Heart left ventricle (tissue), 16 donors: ENCODE measurements at regions of chr7 and their contacts with region 1.

Region 1: GRCh38 chr7:35537067-35538023 is 157.6 kb downstream of the HERPUD2 start:
- DNase-seq: peak; percentile 67 to 89 (median 76)
- ATAC-seq: peak; percentile 94 to 98 (median 97)
- H3K4me3 ChIP-seq: peak overlapping the region; percentile 14 to 55 (median 50)
- H3K27ac ChIP-seq: peak overlapping the region in 2 of 12 donors; percentile 28 to 30
- H3K4me1 ChIP-seq: peaks cover 0 to 9% (median 3%) of the 10 kb centered on the region in 12 donors
- H3K27me3 ChIP-seq: peaks cover 0 to 5% (median 0%) of the 10 kb centered on the region in 9 donors
- CTCF ChIP-seq: peak; percentile 81 to 96 (median 93)
- POLR2A ChIP-seq: no peak

Region 2: GRCh38 chr7:35185907-35186731 is 351.2 kb before region 1 on chr7:
- intact Hi-C with region 1: loop called in 5 of 10 experiments (anchors 5 to 10 kb)
- DNase-seq: peak; percentile 65 to 83 (median 72)
- ATAC-seq: peak; percentile 77 to 93 (median 89)
- H3K4me3 ChIP-seq: peak overlapping the region; percentile 32 to 74 (median 56)
- H3K27ac ChIP-seq: peak overlapping the region; percentile 46 to 95 (median 82)
- H3K4me1 ChIP-seq: peaks cover 0 to 4% (median 0%) of the 10 kb centered on the region in 12 donors
- H3K27me3 ChIP-seq: peaks cover 0 to 16% (median 0%) of the 10 kb centered on the region in 9 donors
- CTCF ChIP-seq: peak in 2 of 12 donors; percentile 26 to 32
- POLR2A ChIP-seq: no peak

Region 3: GRCh38 chr7:35424869-35425495 is 112.4 kb before region 1 on chr7:
- intact Hi-C with region 1: loop called in 3 of 10 experiments (anchors 5 kb)
- DNase-seq: peak; percentile 55 to 79 (median 65)
- ATAC-seq: peak; percentile 55 to 77 (median 72)
- H3K4me3 ChIP-seq: no peak overlapping the region
- H3K27ac ChIP-seq: no peak overlapping the region
- H3K4me1 ChIP-seq: peaks cover 0 to 13% (median 2%) of the 10 kb centered on the region in 12 donors
- H3K27me3 ChIP-seq: peaks cover 0 to 3% (median 0%) of the 10 kb centered on the region in 9 donors
- CTCF ChIP-seq: peak; percentile 64 to 79 (median 70)
- POLR2A ChIP-seq: no peak

Region 4: DNA sequence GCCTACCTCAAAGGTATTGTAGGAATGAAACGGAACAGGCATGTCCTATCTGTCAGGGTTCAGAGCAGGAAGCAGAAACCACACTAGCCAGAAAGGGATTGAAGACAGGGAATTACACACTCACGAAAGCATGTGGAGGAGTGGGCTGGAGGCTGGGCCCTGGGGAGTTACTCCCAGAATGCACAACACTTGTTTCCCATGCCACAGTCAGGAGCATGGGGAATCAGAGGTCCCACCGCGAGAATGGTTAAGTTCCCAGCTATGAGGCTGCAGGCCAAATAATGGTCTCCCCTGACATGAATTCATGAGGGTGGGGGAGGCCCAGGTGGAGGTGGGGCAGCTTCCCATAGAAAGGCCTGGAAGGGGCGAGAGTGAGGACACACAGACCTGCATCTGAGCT is 55.1 kb before region 1 on chr7:
- intact Hi-C with region 1: no loop called
- DNase-seq: no peak
- ATAC-seq: no peak
- H3K4me3 ChIP-seq: no peak overlapping the region
- H3K27ac ChIP-seq: no peak overlapping the region
- H3K4me1 ChIP-seq: no peaks in the 10 kb centered on the region
- H3K27me3 ChIP-seq: no peaks in the 10 kb centered on the region
- CTCF ChIP-seq: no peak
- POLR2A ChIP-seq: no peak

Region 5: GRCh38 chr7:35624299-35625186 is 87.2 kb after region 1 on chr7:
- intact Hi-C with region 1: loop called in 5 of 10 experiments (anchors 5 to 10 kb)
- DNase-seq: peak in 3 of 5 donors; percentile 18 to 36 (median 25)
- ATAC-seq: peak; percentile 76 to 88 (median 84)
- H3K4me3 ChIP-seq: no peak overlapping the region
- H3K27ac ChIP-seq: no peak overlapping the region
- H3K4me1 ChIP-seq: peaks cover 0 to 9% (median 4%) of the 10 kb centered on the region in 12 donors
- H3K27me3 ChIP-seq: no peaks in the 10 kb centered on the region
- CTCF ChIP-seq: peak; percentile 72 to 89 (median 82)
- POLR2A ChIP-seq: no peak

Region 6: GRCh38 chr7:35906191-35906908 is 369.0 kb after region 1 on chr7:
- intact Hi-C with region 1: loop called in 1 of 10 experiments (anchors 10 kb)
- DNase-seq: peak in 4 of 5 donors; percentile 31 to 61 (median 48)
- ATAC-seq: peak; percentile 72 to 91 (median 88)
- H3K4me3 ChIP-seq: no peak overlapping the region
- H3K27ac ChIP-seq: no peak overlapping the region
- H3K4me1 ChIP-seq: peaks cover 0 to 21% (median 5%) of the 10 kb centered on the region in 12 donors
- H3K27me3 ChIP-seq: no peaks in the 10 kb centered on the region
- CTCF ChIP-seq: peak; percentile 83 to 97 (median 94)
- POLR2A ChIP-seq: no peak